ENCODE measurements at regions of chr5 and their contacts with region 1.

Region 1: DNA sequence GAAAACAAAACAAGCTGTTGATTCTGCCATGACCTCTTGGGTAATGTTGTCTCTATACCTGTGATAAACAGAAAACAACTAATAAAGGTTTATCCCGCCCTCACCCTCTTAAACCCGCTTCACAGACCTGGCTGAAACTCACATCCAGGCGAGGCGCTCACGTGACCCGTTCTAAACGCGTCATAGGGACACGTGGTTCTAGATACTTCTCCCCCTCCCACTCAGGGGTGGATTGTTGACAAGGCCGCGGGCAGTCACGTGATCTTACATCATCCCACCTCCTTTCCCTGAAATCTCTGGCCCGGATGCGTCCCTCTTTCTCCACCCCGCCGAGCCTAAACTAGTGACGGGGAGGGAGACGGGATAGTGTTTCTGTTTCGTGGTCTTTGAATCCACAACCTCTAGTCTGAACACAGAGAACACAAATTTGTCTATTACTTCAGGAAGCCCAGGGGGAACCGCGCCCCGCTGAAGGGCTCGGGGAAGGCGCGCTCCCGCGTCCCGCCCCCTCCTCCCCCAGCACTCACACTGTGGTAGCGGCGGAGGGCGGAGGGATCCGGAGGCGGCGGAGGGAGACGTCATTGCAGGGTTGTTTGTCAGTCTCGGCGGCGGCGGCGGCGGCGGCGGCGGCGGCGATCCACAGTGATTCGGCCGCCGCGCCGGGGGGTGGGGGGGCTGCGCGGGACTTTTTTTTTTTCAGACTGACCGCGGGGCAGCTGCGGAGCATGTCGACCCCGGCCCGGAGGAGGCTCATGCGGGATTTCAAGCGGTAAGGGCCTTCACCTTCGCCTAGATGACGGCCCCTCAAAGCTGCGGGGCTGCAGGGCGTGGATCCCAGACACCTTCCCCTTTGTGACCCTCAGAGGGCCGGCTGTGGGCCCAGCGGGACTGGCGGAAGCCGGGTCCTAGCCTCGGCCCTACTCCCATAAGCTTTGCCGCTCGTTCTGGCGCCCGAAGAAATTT is at the start of gene UBE2B:
- DNase-seq: peak; percentile 99
- H3K4me3 ChIP-seq: peak within 1 kb of the TSS; percentile 75
- H3K27ac ChIP-seq: peak within 1 kb of the TSS; percentile 99
- H3K4me1 ChIP-seq: peaks cover 3% of the 10 kb centered on the region
- H3K27me3 ChIP-seq: no peaks in the 10 kb centered on the region
- CTCF ChIP-seq: no peak
- total RNA-seq, gene UBE2B: 55.2 to 128 TPM

Region 2: DNA sequence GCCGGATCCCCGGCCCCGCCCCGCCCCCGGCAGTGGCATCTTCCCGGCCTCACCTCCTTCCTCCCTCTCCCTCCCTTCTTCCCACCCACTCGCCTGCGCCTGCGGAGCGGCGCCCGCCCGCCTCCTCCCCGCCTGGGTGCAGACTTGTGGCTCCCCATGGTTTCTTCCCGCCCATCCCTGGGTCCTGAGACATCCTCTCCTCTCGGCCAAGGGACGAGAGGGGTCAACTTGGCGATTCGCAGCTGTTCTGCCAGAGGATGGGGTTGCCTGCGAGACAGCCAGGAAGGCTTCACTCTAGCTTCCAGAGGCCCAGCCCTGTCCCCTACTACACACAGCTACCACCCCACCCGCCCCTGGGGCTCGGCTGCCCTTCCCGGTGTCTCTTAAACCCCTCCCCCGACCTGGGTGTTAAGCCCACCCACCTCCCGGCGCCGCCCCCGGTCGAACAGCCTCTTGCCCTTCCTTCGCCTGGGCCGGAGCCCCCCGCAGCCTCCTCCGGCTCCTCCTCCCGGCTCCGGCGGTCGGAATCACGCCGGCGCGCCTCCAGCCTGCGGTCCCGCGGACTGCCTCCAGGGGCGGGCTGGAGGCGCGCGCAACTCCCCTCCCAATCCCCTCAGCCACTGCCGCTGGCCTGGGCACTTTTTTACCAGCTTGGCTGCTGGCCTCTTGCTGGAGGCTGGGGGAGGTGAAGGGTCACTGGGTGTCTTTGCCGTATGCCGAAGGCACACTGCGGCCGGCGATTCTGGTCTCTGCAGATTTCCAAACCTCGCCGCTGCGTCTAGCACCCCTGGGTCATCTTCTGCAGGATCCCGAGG is 156.2 kb after region 1 on chr5:
- intact Hi-C with region 1: loop called (anchors 10 kb)
- DNase-seq: peak; percentile 87
- H3K4me3 ChIP-seq: peak overlapping the region; percentile 93
- H3K27ac ChIP-seq: peak overlapping the region; percentile 91
- H3K4me1 ChIP-seq: peaks cover 11% of the 10 kb centered on the region
- H3K27me3 ChIP-seq: no peaks in the 10 kb centered on the region
- CTCF ChIP-seq: peak; percentile 69

Measured in colonic mucosa (tissue), 4 donors.